Naive thymus-derived CD4-positive, alpha-beta T cell (primary cell): ENCODE measurements at regions of chr14 and their contacts with region 1.

Region 1: GRCh38 chr14:96501742-96502617 is at the start of gene PAPOLA:
- DNase-seq: peak; percentile 89 to 96 (median 94)
- ATAC-seq: peak; percentile 94
- H3K4me3 ChIP-seq: peak within 1 kb of the TSS; percentile 87
- H3K4me3 Mint-ChIP-seq: peak within 1 kb of the TSS; percentile 92 to 100 (median 98)
- H3K27ac ChIP-seq: peak within 1 kb of the TSS; percentile 96
- H3K27ac Mint-ChIP-seq: peak within 1 kb of the TSS; percentile 93 to 100 (median 98)
- H3K4me1 ChIP-seq: peaks cover 34 to 40% of the 10 kb centered on the region in 2 donors
- H3K4me1 Mint-ChIP-seq: peaks cover 37 to 47% (median 41%) of the 10 kb centered on the region in 7 donors
- H3K27me3 ChIP-seq: no peaks in the 10 kb centered on the region
- H3K27me3 Mint-ChIP-seq: peaks cover 0 to 14% (median 4%) of the 10 kb centered on the region in 5 donors
- total RNA-seq, gene PAPOLA: 158 to 256 (median 177) TPM

Region 2: DNA sequence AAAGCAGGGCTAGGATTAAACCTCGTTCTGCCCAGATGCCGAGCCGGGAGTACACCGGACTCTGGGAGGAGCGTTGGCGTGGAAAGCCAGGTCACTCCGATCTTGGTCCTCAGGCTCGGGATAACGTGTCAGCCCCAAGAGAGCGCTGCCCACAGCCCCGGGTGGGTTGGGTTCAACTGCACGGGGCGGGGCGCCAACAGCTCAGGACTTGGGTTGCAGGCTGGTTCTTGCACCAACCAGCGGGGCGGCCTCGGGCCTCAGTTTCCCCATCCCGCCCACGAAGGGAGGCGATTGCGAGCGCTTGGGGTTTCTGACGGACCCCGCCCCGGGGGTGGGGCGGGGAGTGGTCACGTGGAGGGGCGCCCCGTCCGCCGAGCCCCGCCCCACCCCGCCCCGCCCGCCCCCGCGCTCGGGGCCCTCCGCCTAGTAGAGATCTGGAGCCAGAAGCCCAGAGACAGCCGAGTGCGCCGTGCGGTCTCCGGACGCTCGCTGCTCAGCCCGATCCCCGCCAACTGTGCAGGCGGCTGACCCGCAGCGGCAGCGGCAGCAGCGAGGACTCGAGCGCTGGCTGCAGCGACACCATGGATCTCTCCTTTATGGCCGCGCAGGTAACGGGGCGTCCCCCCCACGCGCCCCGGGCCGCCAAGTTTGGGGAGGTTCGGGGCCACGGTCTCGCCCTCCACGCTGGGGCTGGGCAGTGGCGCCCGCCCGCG is 462.9 kb before region 1 on chr14 and contains the start of gene C14orf132:
- CTCF ChIA-PET with region 1: no interaction called
- POLR2A ChIA-PET with region 1: interaction called, 3 read pairs
- intact Hi-C with region 1: loop called in 1 of 2 experiments (anchors 1 kb)
- DNase-seq: peak; percentile 7 to 56 (median 27)
- ATAC-seq: peak; percentile 85
- H3K4me3 ChIP-seq: peak within 1 kb of the TSS; percentile 48
- H3K4me3 Mint-ChIP-seq: peak within 1 kb of the TSS; percentile 76 to 93 (median 84)
- H3K27ac ChIP-seq: peak within 1 kb of the TSS; percentile 18
- H3K27ac Mint-ChIP-seq: peak within 1 kb of the TSS in 5 of 9 donors; percentile 25 to 74 (median 62)
- H3K4me1 ChIP-seq: peaks cover 0 to 5% of the 10 kb centered on the region in 2 donors
- H3K4me1 Mint-ChIP-seq: peaks cover 11 to 44% (median 30%) of the 10 kb centered on the region in 7 donors
- H3K27me3 ChIP-seq: peaks cover 0 to 9% of the 10 kb centered on the region in 2 donors
- H3K27me3 Mint-ChIP-seq: peaks cover 0 to 53% (median 32%) of the 10 kb centered on the region in 5 donors
- total RNA-seq, gene C14orf132: 0.41 to 22.9 (median 7.8) TPM

Region 3: DNA sequence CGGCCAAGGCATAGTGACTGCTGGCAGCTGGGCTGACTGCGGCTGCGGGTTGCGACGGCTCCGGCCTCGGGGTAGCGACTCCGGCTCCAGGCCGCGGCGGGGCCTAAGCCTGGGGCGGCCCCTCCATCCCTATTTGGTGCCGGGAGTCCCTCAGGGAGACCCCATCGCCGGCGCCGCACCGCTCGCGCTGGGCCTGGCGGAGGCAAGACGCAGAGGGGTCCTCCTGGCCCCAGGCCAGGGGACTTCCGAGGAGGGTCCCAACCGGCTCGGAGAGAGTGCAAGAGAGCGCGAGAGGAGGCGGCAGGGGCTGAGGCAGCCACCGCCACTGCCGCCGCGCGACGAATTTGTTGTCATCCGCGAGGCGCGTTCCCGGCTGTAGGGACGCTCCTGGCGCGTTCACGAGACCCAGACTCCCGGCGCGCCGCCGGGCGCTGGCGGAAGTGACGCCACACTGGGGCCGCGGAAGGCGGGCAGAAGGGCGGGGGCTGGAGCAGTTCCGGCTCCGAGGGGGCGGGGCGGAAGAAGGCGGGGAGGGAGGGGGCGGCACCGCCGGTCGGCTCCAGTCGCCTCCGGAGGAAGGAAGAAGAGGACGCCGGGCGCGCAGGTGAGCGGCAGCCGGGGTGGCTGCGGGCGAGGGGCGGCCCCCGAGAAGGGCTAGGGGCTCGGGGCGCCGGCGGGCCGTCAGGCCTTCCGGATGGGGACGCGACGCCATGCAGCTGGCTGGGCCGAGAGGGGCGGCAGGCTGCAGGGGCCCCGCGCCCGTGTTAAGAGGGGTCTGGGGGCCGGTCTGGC is 138.8 kb before region 1 on chr14 and contains the starts of genes ATG2B and GSKIP:
- CTCF ChIA-PET with region 1: no interaction called
- POLR2A ChIA-PET with region 1: no interaction called
- intact Hi-C with region 1: loop called (anchors 1 kb)
- DNase-seq: peak; percentile 95 to 99 (median 98)
- ATAC-seq: peak; percentile 94
- H3K4me3 ChIP-seq: peak within 1 kb of the TSS; percentile 72
- H3K4me3 Mint-ChIP-seq: peak within 1 kb of the TSS; percentile 82 to 97 (median 90)
- H3K27ac ChIP-seq: peak within 1 kb of the TSS; percentile 90
- H3K27ac Mint-ChIP-seq: peak within 1 kb of the TSS; percentile 82 to 97 (median 89)
- H3K4me1 ChIP-seq: peaks cover 19 to 27% of the 10 kb centered on the region in 2 donors
- H3K4me1 Mint-ChIP-seq: peaks cover 40 to 72% (median 60%) of the 10 kb centered on the region in 7 donors
- H3K27me3 ChIP-seq: no peaks in the 10 kb centered on the region
- H3K27me3 Mint-ChIP-seq: no peaks in the 10 kb centered on the region
- total RNA-seq, gene ATG2B: 22.7 to 43.4 (median 34.3) TPM
- total RNA-seq, gene GSKIP: 6.7 to 17.7 (median 14.9) TPM

Region 4: GRCh38 chr14:96515731-96516130 is 13.8 kb after region 1 on chr14:
- CTCF ChIA-PET with region 1: no interaction called
- POLR2A ChIA-PET with region 1: interaction called, 3 read pairs
- intact Hi-C with region 1: loop called in 1 of 2 experiments (anchors 2 kb)
- DNase-seq: no peak
- ATAC-seq: no peak
- H3K4me3 ChIP-seq: no peak overlapping the region
- H3K4me3 Mint-ChIP-seq: peak overlapping the region in 4 of 10 donors; percentile 14 to 50 (median 24)
- H3K27ac ChIP-seq: no peak overlapping the region
- H3K27ac Mint-ChIP-seq: peak overlapping the region in 6 of 9 donors; percentile 8 to 80 (median 75)
- H3K4me1 ChIP-seq: peaks cover 39 to 61% of the 10 kb centered on the region in 2 donors
- H3K4me1 Mint-ChIP-seq: peaks cover 42 to 87% (median 75%) of the 10 kb centered on the region in 7 donors
- H3K27me3 ChIP-seq: no peaks in the 10 kb centered on the region
- H3K27me3 Mint-ChIP-seq: no peaks in the 10 kb centered on the region